Common myeloid progenitor, CD34-positive (primary cell): ENCODE measurements at regions of chr1 and their contacts with region 1.

Region 1: GRCh38 chr1:93061895-93062792 is 16.9 kb upstream of the MTF2 start:
- DNase-seq: peak; percentile 53 to 78 (median 72)
- H3K4me3 ChIP-seq: no peak overlapping the region
- H3K27ac ChIP-seq: no peak overlapping the region
- H3K4me1 ChIP-seq: no peaks in the 10 kb centered on the region
- H3K27me3 ChIP-seq: no peaks in the 10 kb centered on the region

Region 2: DNA sequence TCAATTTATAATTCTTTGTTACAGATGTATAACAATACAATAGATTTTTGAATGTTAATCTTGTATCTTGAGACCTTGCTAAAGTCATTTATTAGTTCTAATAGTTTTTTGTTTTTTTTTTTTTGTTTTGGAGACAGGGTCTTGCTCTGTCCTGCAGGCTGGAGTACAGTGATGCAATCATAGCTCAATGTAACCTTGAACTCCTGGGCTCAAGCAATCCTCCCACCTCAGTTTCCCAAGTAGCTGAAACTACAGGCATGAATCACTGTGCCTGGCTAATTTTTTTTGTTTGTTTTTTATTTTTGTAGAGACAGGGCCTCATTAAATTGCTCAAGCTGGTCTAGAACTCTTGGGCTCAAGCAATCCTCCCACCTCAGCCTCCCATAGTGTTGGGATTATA is 74.7 kb before region 1 on chr1:
- CTCF ChIA-PET with region 1: no interaction called
- POLR2A ChIA-PET with region 1: no interaction called
- DNase-seq: no peak
- H3K4me3 ChIP-seq: no peak overlapping the region
- H3K27ac ChIP-seq: no peak overlapping the region
- H3K4me1 ChIP-seq: peaks cover 4 to 13% (median 10%) of the 10 kb centered on the region in 4 experiments
- H3K27me3 ChIP-seq: no peaks in the 10 kb centered on the region

Region 3: DNA sequence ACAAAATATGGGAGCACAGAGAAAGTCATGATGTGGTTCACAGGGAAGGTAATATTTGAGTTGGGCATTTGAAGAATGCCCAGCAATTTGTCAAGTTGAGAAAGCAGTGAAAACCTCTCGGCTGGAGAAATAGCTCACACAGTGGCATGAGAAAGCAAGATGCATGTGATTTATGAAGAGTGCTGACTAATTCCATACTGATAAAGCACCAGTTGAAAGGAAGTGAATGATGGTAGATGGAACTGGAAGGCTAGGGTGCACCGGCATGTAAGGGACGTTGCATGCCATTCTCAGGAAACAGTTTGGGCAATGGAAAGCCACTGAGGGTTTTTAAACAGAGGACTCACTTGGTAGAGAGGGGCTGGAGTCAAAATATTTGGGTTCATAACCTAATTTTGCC is 36.6 kb before region 1 on chr1:
- CTCF ChIA-PET with region 1: interaction called, 22 read pairs
- POLR2A ChIA-PET with region 1: no interaction called
- DNase-seq: peak; percentile 15 to 60 (median 57)
- H3K4me3 ChIP-seq: no peak overlapping the region
- H3K27ac ChIP-seq: no peak overlapping the region
- H3K4me1 ChIP-seq: peaks cover 0 to 19% (median 8%) of the 10 kb centered on the region in 4 experiments
- H3K27me3 ChIP-seq: no peaks in the 10 kb centered on the region